Activated naive CD4-positive, alpha-beta T cell treated with anti-CD3 and anti-CD28 coated beads for 36 hours (primary cell): ENCODE measurements at regions of chr22 and their contacts with region 1.

Region 1: DNA sequence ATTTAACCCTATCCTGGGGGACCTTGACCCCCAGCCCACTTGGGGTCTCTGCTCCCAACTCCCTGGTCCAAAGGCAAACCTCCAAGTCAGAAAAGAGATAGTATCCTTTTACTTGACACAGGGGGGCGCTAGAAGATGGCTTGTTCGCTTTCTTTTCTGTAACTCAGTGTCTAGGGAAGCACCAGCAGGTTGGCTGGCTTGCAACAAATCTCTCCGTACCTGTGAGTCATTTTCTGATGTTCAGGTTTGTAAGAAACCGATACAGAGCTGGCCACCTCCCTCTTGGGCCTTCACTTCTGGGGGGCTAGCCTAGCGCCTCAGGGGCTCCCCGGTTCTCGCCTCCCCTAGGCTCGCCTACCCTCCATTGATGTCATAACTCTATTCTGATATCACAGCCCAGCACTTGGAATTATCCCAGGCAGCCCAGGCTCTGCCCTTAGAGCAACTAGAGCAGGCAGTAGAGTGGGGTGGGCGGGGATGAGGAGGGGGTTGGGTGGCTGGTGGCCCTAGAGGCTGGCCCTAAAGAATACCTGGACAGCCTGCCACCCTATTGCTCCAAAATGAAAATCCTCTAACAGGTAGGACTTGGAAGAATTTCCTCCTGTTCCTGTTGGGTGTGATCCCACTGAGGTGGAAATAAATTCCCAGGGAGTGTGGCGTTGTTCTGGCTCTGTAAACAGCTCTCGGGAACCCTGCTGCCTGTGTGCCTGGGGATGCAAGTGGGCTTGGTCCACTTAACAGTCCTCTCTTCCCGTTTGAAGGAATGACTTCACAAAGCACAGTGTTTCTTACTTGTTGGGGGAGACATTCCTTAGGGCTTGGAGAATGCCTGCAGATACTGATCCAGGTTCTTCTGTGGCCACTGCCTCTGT is 69.4 kb downstream of the OSBP2 start:
- DNase-seq: peak; percentile 79
- H3K4me3 Mint-ChIP-seq: no peak overlapping the region
- H3K27ac Mint-ChIP-seq: no peak overlapping the region
- H3K4me1 Mint-ChIP-seq: peaks cover 2% of the 10 kb centered on the region
- H3K27me3 Mint-ChIP-seq: no peaks in the 10 kb centered on the region

Region 2: DNA sequence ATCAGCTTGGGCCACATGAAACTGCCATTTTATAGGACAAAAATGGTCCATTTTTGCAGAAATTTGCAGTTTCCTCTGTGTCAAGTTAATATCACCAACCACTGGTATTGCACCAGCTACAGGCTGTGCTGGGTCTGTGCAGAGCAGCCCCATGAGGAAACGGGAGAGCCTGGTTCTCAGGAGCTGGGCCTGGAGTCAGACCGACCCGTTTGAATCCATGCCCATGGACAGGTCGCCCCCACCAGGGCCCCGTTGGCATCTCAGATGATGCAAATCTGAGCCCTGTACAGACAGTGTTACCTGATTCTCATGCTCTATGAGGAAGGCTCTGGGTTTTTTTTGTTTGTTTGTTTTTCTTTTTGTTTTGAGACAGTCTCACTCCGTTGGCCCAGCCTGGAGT is 207.7 kb before region 1 on chr22:
- CTCF ChIA-PET with region 1: no interaction called
- intact Hi-C with region 1: no loop called
- DNase-seq: no peak
- H3K4me3 Mint-ChIP-seq: no peak overlapping the region
- H3K27ac Mint-ChIP-seq: no peak overlapping the region
- H3K4me1 Mint-ChIP-seq: no peaks in the 10 kb centered on the region
- H3K27me3 Mint-ChIP-seq: no peaks in the 10 kb centered on the region

Region 3: GRCh38 chr22:30890686-30891442 is 126.8 kb after region 1 on chr22:
- CTCF ChIA-PET with region 1: interaction called, 15 read pairs
- intact Hi-C with region 1: no loop called
- DNase-seq: peak; percentile 45
- H3K4me3 Mint-ChIP-seq: no peak overlapping the region
- H3K27ac Mint-ChIP-seq: no peak overlapping the region
- H3K4me1 Mint-ChIP-seq: peaks cover 33% of the 10 kb centered on the region
- H3K27me3 Mint-ChIP-seq: no peaks in the 10 kb centered on the region

Region 4: DNA sequence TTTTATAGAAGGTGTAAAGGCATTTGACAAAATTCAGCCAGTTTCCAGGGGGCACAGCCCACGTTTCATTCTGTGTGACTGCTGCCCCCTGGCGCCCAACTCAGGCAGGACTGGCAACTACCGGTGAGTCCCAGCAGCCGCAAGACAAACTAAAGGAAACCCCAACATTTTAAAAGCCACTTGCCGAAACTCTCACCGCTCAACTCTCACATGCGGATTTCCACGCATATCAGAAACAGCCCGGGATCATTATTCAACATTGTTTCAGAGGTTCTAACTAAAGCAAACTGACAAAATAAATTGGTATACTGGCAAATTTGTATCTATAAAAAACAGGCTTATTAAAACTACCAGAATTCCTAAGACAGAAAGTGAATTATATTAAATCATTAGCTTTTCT is 156.4 kb after region 1 on chr22:
- CTCF ChIA-PET with region 1: interaction called, 38 read pairs
- intact Hi-C with region 1: loop called (anchors 1 kb)
- DNase-seq: peak; percentile 90
- H3K4me3 Mint-ChIP-seq: peak overlapping the region; percentile 56
- H3K27ac Mint-ChIP-seq: no peak overlapping the region
- H3K4me1 Mint-ChIP-seq: peaks cover 7% of the 10 kb centered on the region
- H3K27me3 Mint-ChIP-seq: no peaks in the 10 kb centered on the region